MCF 10A (cell line): ENCODE measurements at regions of chr2 and their contacts with region 1.

Region 1: GRCh38 chr2:62415019-62415431 is 91.0 kb downstream of the TMEM17 start:
- DNase-seq: no peak
- H3K4me3 Mint-ChIP-seq: no peak overlapping the region
- H3K27ac Mint-ChIP-seq: no peak overlapping the region
- H3K4me1 Mint-ChIP-seq: peaks cover 22% of the 10 kb centered on the region
- H3K27me3 Mint-ChIP-seq: no peaks in the 10 kb centered on the region
- CTCF ChIP-seq: no peak

Region 2: DNA sequence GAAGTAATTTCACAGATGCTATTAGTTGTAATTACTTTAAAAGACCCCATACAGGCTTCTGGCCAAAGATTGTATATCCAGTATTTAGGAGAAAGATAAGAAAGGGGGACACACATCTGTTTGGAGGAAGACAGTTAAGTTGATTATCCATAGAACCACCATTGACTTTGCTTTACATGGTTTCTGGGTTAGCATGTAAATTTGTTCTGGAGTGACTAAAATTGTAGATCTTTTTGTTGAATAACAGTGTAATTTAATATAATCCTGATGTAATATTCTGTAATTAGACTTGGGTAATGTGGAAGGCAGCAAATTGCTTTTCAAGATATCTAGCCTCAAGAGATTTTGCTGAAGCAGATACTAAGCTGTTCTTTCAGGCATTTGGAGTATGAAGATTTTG is 492.3 kb before region 1 on chr2:
- CTCF ChIA-PET with region 1: interaction called, 18 read pairs
- POLR2A ChIA-PET with region 1: interaction called, 4 read pairs
- intact Hi-C with region 1: loop called (anchors 1 kb)
- DNase-seq: no peak
- H3K4me3 Mint-ChIP-seq: no peak overlapping the region
- H3K27ac Mint-ChIP-seq: no peak overlapping the region
- H3K4me1 Mint-ChIP-seq: no peaks in the 10 kb centered on the region
- H3K27me3 Mint-ChIP-seq: no peaks in the 10 kb centered on the region
- CTCF ChIP-seq: no peak

Region 3: GRCh38 chr2:61993444-61994024 is 421.5 kb before region 1 on chr2:
- CTCF ChIA-PET with region 1: interaction called, 29 read pairs
- POLR2A ChIA-PET with region 1: interaction called, 12 read pairs
- intact Hi-C with region 1: loop called (anchors 1 kb)
- DNase-seq: peak; percentile 54
- H3K4me3 Mint-ChIP-seq: no peak overlapping the region
- H3K27ac Mint-ChIP-seq: no peak overlapping the region
- H3K4me1 Mint-ChIP-seq: no peaks in the 10 kb centered on the region
- H3K27me3 Mint-ChIP-seq: no peaks in the 10 kb centered on the region
- CTCF ChIP-seq: peak; percentile 67

Region 4: GRCh38 chr2:62293490-62294271 is 121.3 kb before region 1 on chr2:
- CTCF ChIA-PET with region 1: interaction called, 3 read pairs
- POLR2A ChIA-PET with region 1: interaction called, 4 read pairs
- intact Hi-C with region 1: loop called (anchors 10 kb)
- DNase-seq: peak; percentile 91
- H3K4me3 Mint-ChIP-seq: peak overlapping the region; percentile 35
- H3K27ac Mint-ChIP-seq: peak overlapping the region; percentile 51
- H3K4me1 Mint-ChIP-seq: peaks cover 7% of the 10 kb centered on the region
- H3K27me3 Mint-ChIP-seq: no peaks in the 10 kb centered on the region
- CTCF ChIP-seq: no peak